BJ (cell line): ENCODE measurements at regions of chr2 and their contacts with region 1.

Region 1: DNA sequence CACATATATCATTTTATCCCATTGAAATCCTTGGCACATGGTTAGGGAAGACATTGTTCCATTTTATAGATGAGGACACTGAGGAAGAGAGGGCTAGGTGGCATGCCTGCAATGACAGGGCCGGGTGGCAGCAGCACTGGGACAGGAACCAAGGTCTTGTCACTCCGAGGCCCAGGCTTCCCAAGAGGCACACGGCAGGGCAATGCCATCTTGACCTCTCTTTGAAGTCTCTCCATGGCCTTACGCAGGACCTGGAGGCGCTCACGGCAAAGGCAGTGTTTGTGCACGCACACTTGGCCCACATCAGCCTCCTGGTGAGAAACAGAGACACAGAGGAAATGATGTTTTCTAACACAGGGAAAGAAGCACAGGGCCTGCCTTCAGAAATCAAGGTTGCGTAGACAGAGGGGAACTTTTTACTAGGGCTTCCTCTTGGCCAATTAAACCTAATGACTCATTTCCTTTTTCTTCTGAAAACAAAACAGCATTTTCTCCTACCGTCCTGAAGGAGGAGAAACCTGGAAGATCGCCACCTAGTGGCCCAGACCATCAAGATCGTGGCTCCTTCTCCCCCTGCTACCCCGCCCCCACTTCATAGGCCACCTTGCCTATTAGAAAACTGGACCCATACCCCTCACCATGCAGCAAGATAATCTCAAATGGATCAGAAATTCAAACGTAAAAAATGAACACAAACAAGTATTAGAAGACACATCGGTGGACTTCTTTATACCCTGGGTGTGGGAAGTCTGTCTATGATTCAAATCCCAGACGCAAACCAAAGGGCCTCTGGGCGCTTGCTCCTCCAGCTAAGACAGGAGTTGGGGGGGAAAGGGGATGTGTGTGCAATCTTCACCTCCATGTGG is 74.6 kb upstream of the SP3 start:
- DNase-seq: peak; percentile 70
- H3K4me3 ChIP-seq: no peak overlapping the region
- H3K27me3 ChIP-seq: no peaks in the 10 kb centered on the region
- CTCF ChIP-seq: peak; percentile 93

Region 2: DNA sequence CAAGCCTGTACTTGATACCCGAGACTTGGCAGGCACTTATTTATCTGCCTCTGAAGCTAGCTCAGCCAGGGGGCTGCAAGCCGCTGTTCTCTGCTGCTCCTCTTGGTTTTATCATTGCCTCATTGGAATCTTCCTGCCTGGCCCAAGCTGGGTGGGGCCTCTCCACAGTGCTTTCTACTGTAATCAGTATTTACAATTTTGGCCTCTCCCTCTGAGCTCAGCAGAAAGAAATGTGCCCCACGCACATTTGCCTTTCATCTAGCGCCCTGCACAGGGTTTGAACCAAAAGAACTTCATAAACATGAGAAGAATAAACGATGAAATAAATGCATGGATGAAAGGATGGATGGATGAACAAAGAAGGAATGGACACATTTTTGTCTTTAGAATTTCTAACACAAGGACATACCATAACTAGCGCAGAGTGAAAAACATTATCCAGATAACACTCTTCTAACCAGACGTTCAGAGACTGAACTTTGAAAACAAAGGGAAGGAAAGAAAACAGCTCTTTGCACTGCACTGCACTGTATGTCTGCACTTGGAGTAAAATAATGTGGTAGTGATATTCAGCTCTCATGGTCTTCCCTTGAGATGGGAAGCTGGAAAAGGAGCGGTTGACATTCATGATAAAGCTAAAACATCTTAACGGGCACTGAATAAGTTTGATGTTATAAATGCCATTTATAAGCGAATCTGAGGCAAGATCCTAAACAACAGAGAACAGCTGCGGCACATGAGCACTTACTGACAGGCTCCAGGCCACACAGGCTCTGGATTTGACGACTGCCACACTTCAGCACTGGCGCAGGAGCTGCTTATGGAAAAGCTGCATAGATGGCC is 12.2 kb after region 1 on chr2:
- CTCF ChIA-PET with region 1: interaction called, 14 read pairs
- POLR2A ChIA-PET with region 1: no interaction called
- DNase-seq: no peak
- H3K4me3 ChIP-seq: no peak overlapping the region
- H3K27me3 ChIP-seq: no peaks in the 10 kb centered on the region
- CTCF ChIP-seq: peak; percentile 17; the same call in 1 of the 2 replicates